ENCODE measurements at regions of chrX and their contacts with region 1.

Region 1: DNA sequence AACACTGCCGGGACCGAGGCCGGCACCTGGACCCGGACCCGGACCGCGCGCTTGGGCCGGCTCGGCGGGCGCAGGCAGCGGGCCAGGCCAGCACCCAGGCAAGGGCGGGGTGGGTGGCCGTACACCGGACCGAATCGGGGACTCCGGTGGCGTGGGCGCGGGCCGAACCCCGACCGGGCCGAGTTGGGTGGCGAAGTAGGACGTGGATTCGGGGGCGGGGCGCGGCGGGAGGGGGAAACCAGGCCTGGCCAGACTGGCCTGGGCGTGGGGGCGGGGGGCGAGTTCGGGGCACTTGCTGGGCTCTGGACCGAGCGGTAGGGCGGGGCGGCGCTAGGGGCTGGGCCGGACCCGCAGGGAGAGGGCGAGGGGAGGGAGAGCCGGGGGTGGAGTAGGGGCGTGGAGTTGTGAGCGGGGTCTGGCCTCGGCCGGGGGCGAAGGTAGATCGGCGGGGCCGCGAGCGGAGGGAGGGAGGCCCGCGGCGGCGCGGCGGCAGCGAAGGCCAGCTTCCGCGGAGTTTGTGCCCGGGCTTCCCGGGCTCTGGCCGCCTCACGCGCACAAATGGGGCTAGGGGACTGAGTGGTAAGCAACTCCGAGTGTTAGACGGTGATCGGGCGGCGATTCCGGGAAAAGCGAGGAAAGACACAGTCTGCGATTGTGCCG is 1.8 kb upstream of the BCORL1 start:
- DNase-seq: no peak
- H3K4me3 ChIP-seq: peak overlapping the region in 1 of 2 donors; percentile 67
- H3K27ac ChIP-seq: peak overlapping the region; percentile 75
- H3K4me1 ChIP-seq: peaks cover 7% of the 10 kb centered on the region
- H3K27me3 ChIP-seq: no peaks in the 10 kb centered on the region
- CTCF ChIP-seq: no peak
- POLR2A ChIP-seq: no peak

Region 2: GRCh38 chrX:129931411-129932015 is 49.2 kb before region 1 on chrX:
- intact Hi-C with region 1: loop called (anchors 2 kb)
- DNase-seq: peak in 1 of 2 donors; percentile 95
- H3K4me3 ChIP-seq: peak overlapping the region; percentile 59
- H3K27ac ChIP-seq: peak overlapping the region; percentile 84
- H3K4me1 ChIP-seq: no peaks in the 10 kb centered on the region
- H3K27me3 ChIP-seq: no peaks in the 10 kb centered on the region
- CTCF ChIP-seq: no peak
- POLR2A ChIP-seq: no peak

Region 3: DNA sequence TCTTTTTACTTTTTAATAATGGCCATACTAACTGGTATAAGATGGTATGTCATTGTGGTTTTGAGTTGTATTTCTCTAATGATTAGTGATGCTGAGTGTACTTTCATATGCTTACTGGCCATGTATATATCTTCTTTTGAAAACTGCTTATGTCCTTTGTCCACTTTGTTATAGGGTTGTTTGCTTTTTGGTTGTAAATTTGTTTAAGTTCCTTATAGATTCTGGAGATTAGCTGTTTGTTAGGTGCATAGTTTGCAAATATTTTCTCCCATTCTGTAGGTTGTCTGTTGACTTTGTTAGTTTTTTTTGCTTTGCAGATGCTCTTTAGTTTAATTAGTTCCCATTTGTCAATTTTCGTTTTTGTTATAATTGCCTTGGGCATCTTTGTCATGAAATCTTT is 1904.9 kb after region 1 on chrX:
- intact Hi-C with region 1: no loop called
- DNase-seq: no peak
- H3K4me3 ChIP-seq: no peak overlapping the region
- H3K27ac ChIP-seq: no peak overlapping the region
- H3K4me1 ChIP-seq: no peaks in the 10 kb centered on the region
- H3K27me3 ChIP-seq: no peaks in the 10 kb centered on the region
- CTCF ChIP-seq: no peak
- POLR2A ChIP-seq: no peak